ENCODE measurements at regions of chr18 and their contacts with region 1.

Region 1: GRCh38 chr18:3585656-3586509 is 135.9 kb downstream of the TGIF1 start:
- DNase-seq: peak; percentile 40 to 78 (median 59)
- H3K4me3 ChIP-seq: no peak overlapping the region
- H3K4me3 Mint-ChIP-seq: peak overlapping the region in 3 of 7 donors; percentile 20 to 53 (median 21)
- H3K27ac ChIP-seq: peak overlapping the region; percentile 27
- H3K27ac Mint-ChIP-seq: peak overlapping the region in 6 of 8 donors; percentile 1 to 53 (median 43)
- H3K4me1 ChIP-seq: no peaks in the 10 kb centered on the region
- H3K4me1 Mint-ChIP-seq: peaks cover 9 to 14% (median 13%) of the 10 kb centered on the region in 3 donors
- H3K27me3 ChIP-seq: no peaks in the 10 kb centered on the region
- H3K27me3 Mint-ChIP-seq: peaks cover 0 to 1% of the 10 kb centered on the region in 2 donors

Region 2: DNA sequence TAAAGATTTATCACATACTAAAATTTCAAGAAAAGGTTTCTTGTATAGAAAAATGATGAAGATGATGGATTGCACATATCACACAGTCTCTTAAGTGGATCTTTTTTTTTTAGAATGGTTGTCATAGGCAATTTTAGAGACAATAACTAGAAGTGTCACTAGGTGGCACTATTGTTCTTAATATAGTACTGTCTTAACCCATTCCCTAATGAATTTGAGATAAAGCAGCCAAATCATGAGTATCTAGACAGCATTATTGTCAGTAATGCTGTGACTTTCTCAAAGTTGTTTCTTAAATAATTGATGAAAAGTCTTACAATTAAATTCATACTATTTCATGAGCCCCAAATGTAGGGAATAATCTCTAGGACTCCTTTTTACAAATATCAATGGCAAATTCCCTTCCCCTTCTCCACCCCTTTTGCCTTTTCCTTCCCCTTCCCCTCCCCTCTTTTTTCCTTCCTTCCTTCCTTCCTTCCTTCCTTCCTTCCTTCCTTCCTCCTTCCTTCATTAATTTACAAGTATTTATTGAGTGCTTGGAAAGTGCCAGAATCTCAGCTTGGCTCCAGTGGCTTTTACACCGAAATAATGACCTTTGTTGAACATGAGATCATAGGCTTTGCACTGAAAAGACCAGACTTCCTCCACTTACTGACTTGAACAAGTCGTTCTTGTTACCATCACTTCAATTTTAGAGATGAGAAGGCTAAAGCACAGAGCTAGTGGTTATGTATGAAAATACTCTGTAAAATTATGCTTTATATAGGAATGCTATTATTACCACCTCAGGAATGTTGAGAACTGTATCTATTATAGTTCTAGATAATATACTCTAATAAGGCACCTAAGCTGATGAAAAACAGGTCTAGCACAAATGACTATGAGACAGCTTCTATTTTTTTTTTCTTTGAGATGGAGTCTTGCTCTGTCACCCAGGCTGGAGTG is 304.2 kb before region 1 on chr18:
- CTCF ChIA-PET with region 1: interaction called, 16 read pairs
- POLR2A ChIA-PET with region 1: no interaction called
- DNase-seq: peak in 2 of 5 donors; percentile 63 to 66
- H3K4me3 ChIP-seq: no peak overlapping the region
- H3K4me3 Mint-ChIP-seq: no peak overlapping the region
- H3K27ac ChIP-seq: no peak overlapping the region
- H3K27ac Mint-ChIP-seq: no peak overlapping the region
- H3K4me1 ChIP-seq: no peaks in the 10 kb centered on the region
- H3K4me1 Mint-ChIP-seq: peaks cover 0 to 5% (median 0%) of the 10 kb centered on the region in 3 donors
- H3K27me3 ChIP-seq: no peaks in the 10 kb centered on the region
- H3K27me3 Mint-ChIP-seq: no peaks in the 10 kb centered on the region

Region 3: GRCh38 chr18:3466045-3466444 is 119.8 kb before region 1 on chr18:
- CTCF ChIA-PET with region 1: interaction called, 16 read pairs
- POLR2A ChIA-PET with region 1: no interaction called
- DNase-seq: no peak
- H3K4me3 ChIP-seq: no peak overlapping the region
- H3K4me3 Mint-ChIP-seq: no peak overlapping the region
- H3K27ac ChIP-seq: no peak overlapping the region
- H3K27ac Mint-ChIP-seq: peak overlapping the region in 3 of 8 donors; percentile 38 to 73 (median 61)
- H3K4me1 ChIP-seq: peaks cover 17% of the 10 kb centered on the region
- H3K4me1 Mint-ChIP-seq: peaks cover 22 to 27% (median 24%) of the 10 kb centered on the region in 3 donors
- H3K27me3 ChIP-seq: no peaks in the 10 kb centered on the region
- H3K27me3 Mint-ChIP-seq: no peaks in the 10 kb centered on the region

Region 4: GRCh38 chr18:3560755-3561154 is 25.1 kb before region 1 on chr18:
- CTCF ChIA-PET with region 1: no interaction called
- POLR2A ChIA-PET with region 1: no interaction called
- DNase-seq: no peak
- H3K4me3 ChIP-seq: no peak overlapping the region
- H3K4me3 Mint-ChIP-seq: no peak overlapping the region
- H3K27ac ChIP-seq: no peak overlapping the region
- H3K27ac Mint-ChIP-seq: no peak overlapping the region
- H3K4me1 ChIP-seq: no peaks in the 10 kb centered on the region
- H3K4me1 Mint-ChIP-seq: no peaks in the 10 kb centered on the region
- H3K27me3 ChIP-seq: no peaks in the 10 kb centered on the region
- H3K27me3 Mint-ChIP-seq: peaks cover 0 to 2% of the 10 kb centered on the region in 2 donors

Region 5: DNA sequence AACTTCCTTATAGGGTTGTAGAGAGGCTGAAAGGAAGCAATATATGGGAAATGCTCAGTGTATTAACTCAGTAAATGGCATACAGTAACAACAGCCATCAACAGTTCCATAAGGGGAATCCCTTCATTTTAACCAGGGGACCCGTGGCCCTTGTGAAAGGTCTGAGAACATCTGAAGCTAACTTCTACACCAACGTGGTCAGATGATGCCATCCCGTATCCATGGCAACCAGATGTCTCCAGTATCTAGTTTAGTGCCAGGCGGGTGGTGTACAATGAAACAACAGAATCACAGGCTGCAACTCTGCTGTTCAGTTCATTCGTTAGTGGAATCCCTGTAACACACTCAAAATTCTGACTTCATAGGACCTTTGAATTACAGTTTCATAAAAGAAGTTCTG is 26.4 kb after region 1 on chr18:
- CTCF ChIA-PET with region 1: no interaction called
- POLR2A ChIA-PET with region 1: no interaction called
- DNase-seq: no peak
- H3K4me3 ChIP-seq: no peak overlapping the region
- H3K4me3 Mint-ChIP-seq: no peak overlapping the region
- H3K27ac ChIP-seq: no peak overlapping the region
- H3K27ac Mint-ChIP-seq: no peak overlapping the region
- H3K4me1 ChIP-seq: peaks cover 1% of the 10 kb centered on the region
- H3K4me1 Mint-ChIP-seq: peaks cover 12 to 15% (median 12%) of the 10 kb centered on the region in 3 donors
- H3K27me3 ChIP-seq: no peaks in the 10 kb centered on the region
- H3K27me3 Mint-ChIP-seq: no peaks in the 10 kb centered on the region

Region 6: DNA sequence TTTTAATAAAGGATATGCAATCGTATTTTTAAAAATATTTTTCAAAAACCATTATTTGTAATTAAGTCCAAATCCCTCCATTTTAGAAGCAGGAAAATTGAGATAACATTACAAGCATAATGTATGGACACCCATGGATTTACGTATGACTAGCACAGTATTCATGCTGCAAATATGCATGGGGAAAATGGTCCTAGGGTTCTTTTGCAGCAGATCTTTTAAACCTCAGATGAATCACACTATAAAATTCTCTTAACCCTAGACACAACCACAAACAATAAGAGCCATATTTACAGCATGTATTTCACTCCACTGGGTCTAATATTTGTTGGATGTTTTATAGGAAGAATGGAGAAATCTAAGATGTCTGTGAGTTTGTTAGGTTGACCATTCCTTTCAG is 317.5 kb after region 1 on chr18:
- CTCF ChIA-PET with region 1: no interaction called
- POLR2A ChIA-PET with region 1: no interaction called
- DNase-seq: no peak
- H3K4me3 ChIP-seq: no peak overlapping the region
- H3K4me3 Mint-ChIP-seq: no peak overlapping the region
- H3K27ac ChIP-seq: no peak overlapping the region
- H3K27ac Mint-ChIP-seq: no peak overlapping the region
- H3K4me1 ChIP-seq: no peaks in the 10 kb centered on the region
- H3K4me1 Mint-ChIP-seq: no peaks in the 10 kb centered on the region
- H3K27me3 ChIP-seq: no peaks in the 10 kb centered on the region
- H3K27me3 Mint-ChIP-seq: peaks cover 2 to 17% of the 10 kb centered on the region in 2 donors